ENCODE measurements at regions of chr15 and their contacts with region 1.

Region 1: DNA sequence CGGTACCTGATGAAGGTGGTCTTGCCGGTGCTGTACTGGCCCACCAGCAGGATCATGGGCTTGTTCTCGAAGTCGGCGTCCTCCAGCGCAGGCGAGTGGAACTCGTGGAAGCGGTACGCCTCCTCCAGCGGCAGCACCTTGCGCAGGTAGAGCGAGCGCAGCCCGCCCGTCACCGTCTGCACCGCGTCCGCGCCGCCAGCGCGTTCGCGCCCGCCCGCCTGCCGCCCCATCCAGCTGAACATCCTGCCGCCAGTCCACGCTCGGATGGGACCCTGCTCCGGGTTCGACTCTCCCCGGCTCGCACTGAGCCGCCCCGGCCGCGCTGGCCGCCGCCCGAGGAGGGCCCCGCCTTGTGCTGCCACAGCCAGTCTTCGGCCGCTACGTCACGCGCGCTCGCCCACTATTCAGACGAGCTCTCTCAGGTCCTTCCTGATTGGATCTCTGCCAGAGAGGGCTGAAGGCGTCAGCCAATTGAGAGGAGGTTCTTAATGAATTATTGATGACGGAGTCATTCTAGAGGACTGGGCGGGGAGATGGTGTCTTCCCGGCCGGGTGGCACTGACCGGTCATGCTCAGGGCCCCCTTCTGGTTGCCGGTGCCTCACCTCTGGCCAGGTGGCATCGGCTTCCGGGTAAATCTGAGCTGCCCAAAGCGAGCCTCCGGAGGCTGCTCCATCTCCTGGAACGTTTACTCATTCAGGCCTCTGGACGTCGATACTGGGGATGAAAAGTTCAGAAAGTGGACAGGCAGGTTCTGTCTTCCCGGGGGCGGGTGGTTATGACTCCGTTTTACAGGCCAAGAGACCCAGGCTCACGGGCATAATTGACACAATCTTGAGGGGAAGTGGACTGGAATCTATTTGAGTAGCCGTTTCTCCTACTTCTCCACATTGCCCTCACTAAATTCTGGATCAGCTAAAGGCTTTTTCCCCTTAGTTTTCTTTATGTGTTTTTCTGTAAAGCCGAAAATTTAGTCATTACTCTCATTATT is at the start of gene EHD4:
- DNase-seq: peak; percentile 99
- ATAC-seq: peak; percentile 96 to 97
- total RNA-seq, gene EHD4: 34.0 to 42.1 TPM

Region 2: DNA sequence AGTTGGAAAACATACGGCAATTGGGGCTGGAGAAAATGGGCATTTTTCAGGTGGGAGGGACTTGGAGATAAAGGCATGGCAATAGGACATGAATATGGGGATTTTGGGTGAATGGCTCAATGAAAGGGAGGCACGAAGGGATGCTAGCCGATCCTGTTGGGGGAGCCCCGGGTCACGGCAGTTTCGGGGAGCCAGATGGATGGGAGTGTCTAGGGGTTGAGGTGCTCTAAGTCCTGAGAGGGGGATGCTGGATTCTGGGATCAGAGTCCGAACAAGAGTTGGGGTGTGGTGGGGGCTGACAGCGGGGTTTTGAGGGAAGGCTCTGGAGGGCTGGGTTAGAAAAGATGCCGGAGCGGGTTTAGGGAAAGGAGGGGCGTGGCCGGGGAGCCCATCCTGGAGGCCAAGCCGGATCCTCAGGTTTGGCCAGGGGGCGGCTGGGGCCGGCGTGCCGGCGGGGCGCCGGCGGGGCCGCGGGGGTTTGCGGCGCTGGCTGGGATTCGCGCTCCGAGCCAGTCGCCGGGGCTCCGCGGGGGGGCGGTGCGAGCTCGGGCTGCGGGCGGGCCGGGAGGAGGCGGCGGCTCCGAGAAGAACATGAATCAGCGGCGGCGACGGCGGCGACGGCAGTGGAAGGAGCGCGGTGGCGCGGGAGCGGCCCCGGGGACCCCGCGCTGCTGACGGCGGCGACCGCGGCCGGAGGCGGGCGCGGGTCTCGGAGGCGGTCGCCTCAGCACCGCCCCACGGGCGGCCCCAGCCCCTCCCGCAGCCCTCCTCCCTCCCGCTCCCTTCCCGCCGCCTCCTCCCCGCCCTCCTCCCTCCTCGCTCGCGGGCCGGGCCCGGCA is 413.9 kb before region 1 on chr15 and contains the start of gene TYRO3:
- intact Hi-C with region 1: no loop called
- DNase-seq: peak; percentile 71
- ATAC-seq: peak; percentile 58 to 76
- total RNA-seq, gene TYRO3: 9.1 to 21.0 TPM

Region 3: GRCh38 chr15:41790756-41791546 is 181.6 kb before region 1 on chr15:
- intact Hi-C with region 1: no loop called
- DNase-seq: peak; percentile 47
- ATAC-seq: peak; percentile 45 to 62

Region 4: GRCh38 chr15:41904541-41905005 is 68.0 kb before region 1 on chr15:
- intact Hi-C with region 1: loop called in 1 of 2 experiments (anchors 10 kb)
- DNase-seq: peak; percentile 66
- ATAC-seq: peak; percentile 67 to 71

Region 5: DNA sequence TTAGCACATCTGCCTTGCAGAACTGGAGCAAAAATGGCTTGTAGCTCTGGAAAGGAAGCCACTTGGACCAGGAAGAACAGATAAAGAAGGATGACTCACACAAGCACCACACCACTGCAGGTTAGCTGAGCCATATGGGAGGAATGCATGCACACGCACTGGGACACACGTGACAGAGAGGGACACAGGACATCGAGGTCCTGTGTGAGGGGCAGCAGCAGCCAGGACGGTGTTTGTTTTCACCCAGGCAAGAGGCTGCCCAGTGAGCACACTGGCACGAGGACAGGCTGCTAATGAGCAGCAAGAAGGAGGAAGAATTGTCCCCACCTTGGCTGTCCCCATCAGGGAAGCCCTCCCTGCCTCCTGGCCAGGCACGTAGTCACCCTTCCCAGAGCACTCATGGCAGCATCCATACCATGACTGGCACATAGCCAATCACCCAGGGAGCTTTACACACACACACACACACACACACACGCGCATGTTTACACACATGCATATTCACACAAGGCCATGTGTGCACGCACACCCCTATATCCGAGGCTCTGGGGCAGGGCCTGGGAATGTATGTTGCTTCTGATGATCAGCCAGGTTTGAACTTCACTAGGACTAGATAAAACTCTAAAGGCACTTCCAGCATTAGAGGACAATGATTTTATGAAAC is 54.6 kb before region 1 on chr15:
- intact Hi-C with region 1: loop called in 1 of 2 experiments (anchors 5 kb)
- DNase-seq: no peak
- ATAC-seq: peak; percentile 18 to 42

Region 6: DNA sequence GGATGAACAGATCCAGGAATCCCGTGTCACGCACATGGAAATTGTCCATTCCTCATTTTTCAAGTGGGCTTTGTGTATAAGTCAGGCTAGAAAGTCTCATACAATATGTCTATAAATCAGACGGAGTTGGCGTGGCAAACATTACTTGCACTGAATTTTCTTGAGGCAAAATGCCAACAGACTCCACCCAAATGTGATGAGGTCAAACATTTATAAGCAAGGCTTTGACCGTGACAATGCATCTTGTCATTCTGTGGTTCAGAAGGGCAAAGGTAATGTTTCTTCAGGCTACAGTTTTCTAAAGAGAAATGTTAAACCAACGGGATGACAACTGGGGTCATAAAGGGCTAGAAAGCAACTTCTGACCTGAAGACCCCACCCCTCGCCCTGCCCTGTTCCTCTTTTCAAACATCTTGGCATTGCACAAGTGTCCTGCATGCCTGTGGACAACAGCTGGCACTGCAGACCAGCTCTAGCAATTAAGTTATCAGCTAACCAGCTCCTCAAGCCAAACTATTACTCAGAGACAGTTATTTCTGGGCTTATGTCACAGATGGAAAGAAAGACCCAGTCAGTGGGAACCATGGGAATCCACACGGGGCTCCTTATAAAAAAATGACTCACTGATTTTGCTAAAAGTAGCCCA is 42.2 kb before region 1 on chr15:
- intact Hi-C with region 1: loop called in 1 of 2 experiments (anchors 5 kb)
- DNase-seq: peak; percentile 78
- ATAC-seq: peak; percentile 56 to 80

Region 7: DNA sequence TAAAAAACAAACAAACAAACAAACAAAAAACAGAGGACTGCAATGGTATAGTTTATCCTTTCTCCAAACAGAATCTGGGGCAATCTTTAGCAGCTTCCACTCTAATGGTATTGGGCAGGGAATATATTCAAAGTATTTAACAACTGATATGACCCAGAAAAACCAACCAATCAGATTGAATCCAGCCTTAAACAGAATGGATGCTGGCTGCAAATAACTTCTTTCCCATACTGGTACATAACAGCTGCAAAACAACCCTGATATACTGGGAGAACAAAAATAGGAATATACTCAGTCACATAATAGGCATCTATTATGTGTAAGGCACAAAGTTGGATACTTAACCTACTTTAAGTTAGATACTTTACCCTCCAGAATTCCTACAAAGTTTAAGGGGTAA is 1084.1 kb after region 1 on chr15:
- intact Hi-C with region 1: no loop called
- DNase-seq: no peak
- ATAC-seq: no peak

Measured in left cardiac atrium (tissue), 4 donors.